OCI-LY7 (cell line): ENCODE measurements at regions of chr4 and their contacts with region 1.

Region 1: DNA sequence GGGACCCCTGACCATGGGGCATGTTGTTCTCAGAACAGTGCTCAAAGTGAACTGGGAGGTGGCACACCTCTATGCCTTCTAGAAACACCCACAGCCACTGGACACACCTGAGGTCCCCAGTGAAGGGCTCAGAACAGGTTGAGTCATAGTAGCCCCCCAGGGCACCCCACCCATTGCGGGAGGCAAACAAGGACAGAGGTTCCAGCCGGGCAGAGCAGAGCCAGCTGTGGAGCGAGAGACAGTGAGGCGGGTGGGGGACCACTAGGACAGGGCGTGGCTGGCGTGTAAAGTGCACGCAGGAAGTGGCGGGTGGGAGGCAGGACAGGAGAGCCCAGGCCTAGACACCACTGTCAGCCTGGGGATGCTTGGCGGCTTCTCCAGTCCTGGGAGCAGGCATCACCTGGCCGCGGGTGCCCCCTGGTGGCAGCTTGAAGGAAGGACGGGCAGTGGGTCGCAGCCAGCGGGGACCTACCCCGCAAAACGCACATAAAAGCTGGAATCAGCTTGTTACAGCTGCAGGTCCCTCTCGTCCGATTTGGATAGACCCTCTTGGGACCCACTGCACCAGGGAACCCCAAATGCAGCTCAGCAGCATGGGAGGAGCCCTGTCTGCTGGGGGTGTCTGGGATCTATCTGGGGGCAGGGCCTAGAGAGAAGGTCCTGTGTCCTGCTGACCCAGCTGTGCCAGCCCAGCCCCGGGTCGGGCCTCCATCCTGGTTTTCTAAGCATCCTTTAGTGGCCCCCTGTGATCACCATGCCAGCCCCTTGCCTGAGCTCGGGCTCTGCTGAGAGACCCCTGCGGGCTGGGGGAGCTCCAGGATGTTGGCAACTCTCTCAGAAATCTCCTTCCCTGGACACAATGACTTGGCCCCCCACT is 57.6 kb downstream of the WFS1 start:
- DNase-seq: peak; percentile 78
- H3K4me3 ChIP-seq: no peak overlapping the region
- H3K27ac ChIP-seq: no peak overlapping the region
- H3K4me1 ChIP-seq: peaks cover 8% of the 10 kb centered on the region
- CTCF ChIP-seq: peak; percentile 83

Region 2: GRCh38 chr4:5839751-5840674 is 487.3 kb before region 1 on chr4:
- CTCF ChIA-PET with region 1: no interaction called
- POLR2A ChIA-PET with region 1: no interaction called
- intact Hi-C with region 1: no loop called
- DNase-seq: no peak
- H3K4me3 ChIP-seq: no peak overlapping the region
- H3K27ac ChIP-seq: no peak overlapping the region
- H3K4me1 ChIP-seq: no peaks in the 10 kb centered on the region
- CTCF ChIP-seq: no peak

Region 3: GRCh38 chr4:5998333-5998936 is 328.8 kb before region 1 on chr4:
- CTCF ChIA-PET with region 1: no interaction called
- POLR2A ChIA-PET with region 1: no interaction called
- intact Hi-C with region 1: loop called (anchors 5 kb)
- DNase-seq: peak; percentile 57
- H3K4me3 ChIP-seq: no peak overlapping the region
- H3K27ac ChIP-seq: no peak overlapping the region
- H3K4me1 ChIP-seq: no peaks in the 10 kb centered on the region
- CTCF ChIP-seq: peak; percentile 97

Region 4: DNA sequence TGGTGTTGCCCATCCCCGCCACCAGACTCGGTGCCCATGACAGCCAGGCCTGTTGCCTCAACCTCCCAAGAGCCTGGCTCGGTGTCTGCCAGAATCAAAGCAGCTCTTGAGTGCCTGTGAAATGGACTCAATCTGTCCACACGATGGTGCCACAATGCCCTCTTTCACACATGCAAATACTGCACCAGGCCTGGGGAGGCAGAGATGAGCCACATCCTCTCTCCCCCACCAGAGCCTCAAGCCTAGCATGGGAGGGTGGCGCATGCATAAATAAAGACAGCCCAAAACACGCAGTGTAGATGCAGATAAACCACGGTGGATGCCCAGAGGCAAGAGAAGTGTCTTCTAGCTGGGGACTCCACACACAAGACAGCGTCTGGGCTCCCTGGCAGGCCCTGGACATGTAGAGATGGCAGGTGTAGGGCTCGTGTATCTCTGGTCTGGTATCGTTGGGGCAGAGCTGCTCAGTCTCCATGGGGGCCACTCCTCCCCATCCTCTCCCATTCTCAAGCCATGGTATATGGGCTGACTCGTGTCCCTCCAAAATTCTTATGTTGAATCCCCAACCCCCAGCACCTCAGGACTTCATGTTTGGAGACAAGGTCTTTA is 192.6 kb before region 1 on chr4:
- CTCF ChIA-PET with region 1: interaction called, 4 read pairs
- POLR2A ChIA-PET with region 1: no interaction called
- intact Hi-C with region 1: loop called (anchors 5 kb)
- DNase-seq: peak; percentile 47
- H3K4me3 ChIP-seq: no peak overlapping the region
- H3K27ac ChIP-seq: no peak overlapping the region
- H3K4me1 ChIP-seq: no peaks in the 10 kb centered on the region
- CTCF ChIP-seq: peak; percentile 72

Region 5: GRCh38 chr4:6250235-6250983 is 76.9 kb before region 1 on chr4:
- CTCF ChIA-PET with region 1: interaction called, 6 read pairs
- POLR2A ChIA-PET with region 1: no interaction called
- intact Hi-C with region 1: loop called (anchors 1 kb)
- DNase-seq: peak; percentile 72
- H3K4me3 ChIP-seq: no peak overlapping the region
- H3K27ac ChIP-seq: no peak overlapping the region
- H3K4me1 ChIP-seq: no peaks in the 10 kb centered on the region
- CTCF ChIP-seq: peak; percentile 90

Region 6: GRCh38 chr4:6264225-6264540 is 63.1 kb before region 1 on chr4:
- CTCF ChIA-PET with region 1: interaction called, 12 read pairs
- POLR2A ChIA-PET with region 1: interaction called, 4 read pairs
- intact Hi-C with region 1: loop called (anchors 1 kb)
- DNase-seq: peak; percentile 71
- H3K4me3 ChIP-seq: no peak overlapping the region
- H3K27ac ChIP-seq: no peak overlapping the region
- H3K4me1 ChIP-seq: peaks cover 38% of the 10 kb centered on the region
- CTCF ChIP-seq: peak; percentile 82

Region 7: GRCh38 chr4:6308899-6309643 is 18.2 kb before region 1 on chr4:
- CTCF ChIA-PET with region 1: no interaction called
- POLR2A ChIA-PET with region 1: no interaction called
- intact Hi-C with region 1: no loop called
- DNase-seq: no peak
- H3K4me3 ChIP-seq: no peak overlapping the region
- H3K27ac ChIP-seq: no peak overlapping the region
- H3K4me1 ChIP-seq: no peaks in the 10 kb centered on the region
- CTCF ChIP-seq: no peak

Region 8: GRCh38 chr4:6546681-6547447 is 219.6 kb after region 1 on chr4:
- CTCF ChIA-PET with region 1: no interaction called
- POLR2A ChIA-PET with region 1: no interaction called
- intact Hi-C with region 1: loop called (anchors 5 kb)
- DNase-seq: peak; percentile 79
- H3K4me3 ChIP-seq: no peak overlapping the region
- H3K27ac ChIP-seq: no peak overlapping the region
- H3K4me1 ChIP-seq: no peaks in the 10 kb centered on the region
- CTCF ChIP-seq: peak; percentile 96